ENCODE measurements at regions of chr1 and their contacts with region 1.

Region 1: GRCh38 chr1:156096640-156097391 is 14.6 kb upstream of the MEX3A start:
- DNase-seq: peak; percentile 85 to 90
- ATAC-seq: peak; percentile 96 to 98
- H3K4me3 ChIP-seq: no peak overlapping the region
- H3K27ac ChIP-seq: peak overlapping the region; percentile 50 to 80 (median 74)
- H3K4me1 ChIP-seq: peaks cover 7 to 23% of the 10 kb centered on the region in 2 donors
- H3K27me3 ChIP-seq: no peaks in the 10 kb centered on the region
- CTCF ChIP-seq: peak; percentile 97 to 98 (median 98)
- POLR2A ChIP-seq: no peak

Region 2: GRCh38 chr1:156129706-156130581 is 33.1 kb after region 1 on chr1:
- in situ Hi-C with region 1: loop called (anchors 5 kb)
- intact Hi-C with region 1: loop called (anchors 1 kb)
- DNase-seq: peak; percentile 64 to 88
- ATAC-seq: peak; percentile 59 to 79
- H3K4me3 ChIP-seq: peak overlapping the region in 2 of 4 donors; percentile 8 to 42
- H3K27ac ChIP-seq: peak overlapping the region; percentile 98 to 99 (median 98)
- H3K4me1 ChIP-seq: peaks cover 53 to 59% of the 10 kb centered on the region in 2 donors
- H3K27me3 ChIP-seq: no peaks in the 10 kb centered on the region
- CTCF ChIP-seq: peak; percentile 98 to 99 (median 99)
- POLR2A ChIP-seq: no peak

Region 3: GRCh38 chr1:156282479-156283222 is 185.8 kb after region 1 on chr1 and contains the start of gene SMG5:
- in situ Hi-C with region 1: no loop called
- intact Hi-C with region 1: loop called (anchors 5 kb)
- DNase-seq: peak; percentile 97
- ATAC-seq: peak; percentile 87 to 90
- H3K4me3 ChIP-seq: peak within 1 kb of the TSS; percentile 72 to 97 (median 82)
- H3K27ac ChIP-seq: peak within 1 kb of the TSS; percentile 90 to 99 (median 94)
- H3K4me1 ChIP-seq: peaks cover 27 to 33% of the 10 kb centered on the region in 2 donors
- H3K27me3 ChIP-seq: no peaks in the 10 kb centered on the region
- CTCF ChIP-seq: no peak
- POLR2A ChIP-seq: peak; percentile 91 to 95
- total RNA-seq, gene SMG5: 47.4 to 83.1 (median 62.7) TPM

Region 4: GRCh38 chr1:156601122-156601830 is 504.5 kb after region 1 on chr1 and contains the start of gene GPATCH4:
- in situ Hi-C with region 1: no loop called
- intact Hi-C with region 1: no loop called
- DNase-seq: peak; percentile 61 to 66
- ATAC-seq: peak; percentile 88 to 90
- H3K4me3 ChIP-seq: peak within 1 kb of the TSS; percentile 63 to 88 (median 82)
- H3K27ac ChIP-seq: peak within 1 kb of the TSS; percentile 77 to 87 (median 82)
- H3K4me1 ChIP-seq: peaks cover 15 to 16% of the 10 kb centered on the region in 2 donors
- H3K27me3 ChIP-seq: no peaks in the 10 kb centered on the region
- CTCF ChIP-seq: no peak
- POLR2A ChIP-seq: peak in 1 of 2 donors; percentile 30
- total RNA-seq, gene GPATCH4: 35.6 to 103 (median 47.6) TPM

Measured in gastrocnemius medialis (tissue), 4 donors.